Panc1 (cell line): ENCODE measurements at regions of chr6 and their contacts with region 1.

Region 1: GRCh38 chr6:33620856-33621710 is at the start of gene ITPR3:
- DNase-seq: no peak
- ATAC-seq: peak; percentile 76
- H3K4me3 ChIP-seq: peak within 1 kb of the TSS; percentile 82 to 87
- H3K27ac ChIP-seq: peak within 1 kb of the TSS; percentile 87
- H3K4me1 ChIP-seq: peaks cover 32% of the 10 kb centered on the region
- H3K27me3 ChIP-seq: no peaks in the 10 kb centered on the region
- CTCF ChIP-seq: no peak
- total RNA-seq, gene ITPR3: 65.8 TPM

Region 2: GRCh38 chr6:33597551-33598322 is 23.3 kb before region 1 on chr6:
- CTCF ChIA-PET with region 1: no interaction called
- POLR2A ChIA-PET with region 1: interaction called, 13 read pairs
- in situ Hi-C with region 1: no loop called
- intact Hi-C with region 1: no loop called
- DNase-seq: no peak
- ATAC-seq: no peak
- H3K4me3 ChIP-seq: no peak overlapping the region
- H3K27ac ChIP-seq: no peak overlapping the region; the same call in 1 of the 2 replicates
- H3K4me1 ChIP-seq: peaks cover 11% of the 10 kb centered on the region; the same call in 1 of the 2 replicates
- H3K27me3 ChIP-seq: no peaks in the 10 kb centered on the region
- CTCF ChIP-seq: no peak